MCF 10A (cell line): ENCODE measurements at regions of chr14 and their contacts with region 1.

Region 1: GRCh38 chr14:33589326-33589725 is 361.5 kb downstream of the EGLN3 start:
- DNase-seq: peak; percentile 95
- H3K4me3 Mint-ChIP-seq: no peak overlapping the region
- H3K27ac Mint-ChIP-seq: peak overlapping the region; percentile 81
- H3K4me1 Mint-ChIP-seq: peaks cover 12% of the 10 kb centered on the region
- H3K27me3 Mint-ChIP-seq: no peaks in the 10 kb centered on the region
- CTCF ChIP-seq: no peak

Region 2: GRCh38 chr14:33465846-33466635 is 123.3 kb before region 1 on chr14:
- CTCF ChIA-PET with region 1: no interaction called
- POLR2A ChIA-PET with region 1: no interaction called
- intact Hi-C with region 1: no loop called
- DNase-seq: no peak
- H3K4me3 Mint-ChIP-seq: no peak overlapping the region
- H3K27ac Mint-ChIP-seq: no peak overlapping the region
- H3K4me1 Mint-ChIP-seq: no peaks in the 10 kb centered on the region
- H3K27me3 Mint-ChIP-seq: no peaks in the 10 kb centered on the region
- CTCF ChIP-seq: no peak

Region 3: DNA sequence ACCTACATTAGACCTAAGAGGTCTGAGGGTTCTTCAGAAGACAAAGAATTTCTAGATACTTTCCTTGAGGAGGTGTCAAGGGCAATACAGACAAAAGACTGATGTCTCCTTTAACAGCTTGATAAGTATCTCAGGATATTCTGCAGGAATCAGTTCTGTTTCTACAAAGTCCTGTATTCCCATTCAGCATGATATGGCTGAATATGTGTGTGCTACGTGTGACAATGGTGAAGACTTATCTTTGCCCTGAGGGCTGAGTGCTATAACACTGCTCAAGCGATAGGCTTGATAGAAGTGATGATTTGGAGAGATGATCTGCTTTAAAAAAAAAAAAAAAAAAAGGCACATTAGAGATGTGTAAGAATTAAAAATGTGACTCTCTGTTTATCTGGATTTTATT is 68.1 kb before region 1 on chr14:
- CTCF ChIA-PET with region 1: no interaction called
- POLR2A ChIA-PET with region 1: no interaction called
- intact Hi-C with region 1: no loop called
- DNase-seq: no peak
- H3K4me3 Mint-ChIP-seq: no peak overlapping the region
- H3K27ac Mint-ChIP-seq: no peak overlapping the region
- H3K4me1 Mint-ChIP-seq: peaks cover 22% of the 10 kb centered on the region
- H3K27me3 Mint-ChIP-seq: no peaks in the 10 kb centered on the region
- CTCF ChIP-seq: no peak

Region 4: GRCh38 chr14:33556382-33557121 is 32.8 kb before region 1 on chr14:
- CTCF ChIA-PET with region 1: no interaction called
- POLR2A ChIA-PET with region 1: no interaction called
- intact Hi-C with region 1: loop called (anchors 1 kb)
- DNase-seq: peak; percentile 83
- H3K4me3 Mint-ChIP-seq: no peak overlapping the region
- H3K27ac Mint-ChIP-seq: peak overlapping the region; percentile 72
- H3K4me1 Mint-ChIP-seq: peaks cover 16% of the 10 kb centered on the region
- H3K27me3 Mint-ChIP-seq: no peaks in the 10 kb centered on the region
- CTCF ChIP-seq: no peak

Region 5: DNA sequence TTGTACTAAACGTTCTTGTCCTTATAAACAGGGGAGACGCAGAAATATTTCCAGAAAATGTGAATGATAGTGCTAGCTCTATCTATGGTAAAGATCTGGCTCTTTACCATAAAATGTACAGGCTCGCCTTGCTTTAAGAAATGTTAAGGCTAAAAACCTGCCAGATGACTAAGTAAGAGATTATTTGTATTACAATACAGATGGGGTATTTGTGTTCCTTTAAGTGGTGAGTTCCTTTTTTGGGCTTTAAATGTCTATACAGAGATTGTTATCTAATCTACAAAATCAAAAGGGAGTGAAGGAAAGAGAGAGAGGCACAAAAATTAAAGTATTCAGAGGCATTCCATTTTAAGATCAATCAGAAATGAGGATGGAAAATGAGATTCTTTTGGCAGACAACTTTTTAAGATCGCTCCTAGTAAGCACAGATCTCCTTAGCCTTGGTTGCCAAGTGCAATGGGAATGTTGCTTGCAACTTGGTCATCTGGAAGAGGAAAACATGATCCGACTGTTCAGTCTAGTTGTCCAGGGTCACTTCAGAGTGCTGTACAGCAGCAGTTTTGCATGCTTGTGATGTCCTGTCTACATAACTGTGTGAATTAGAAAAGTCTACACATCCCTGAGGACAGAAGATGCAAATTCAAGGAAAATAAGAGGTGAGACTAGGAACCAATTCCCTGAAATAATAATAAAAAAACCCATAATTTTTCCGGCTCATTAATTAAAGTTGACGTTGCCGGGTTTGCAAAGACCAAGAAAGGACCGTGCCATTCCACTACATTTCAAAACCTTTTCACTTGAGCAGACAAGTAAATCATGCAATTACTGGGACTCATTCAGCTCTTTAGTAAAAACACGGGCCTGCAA is 19.3 kb before region 1 on chr14:
- CTCF ChIA-PET with region 1: interaction called, 3 read pairs
- POLR2A ChIA-PET with region 1: interaction called, 7 read pairs
- intact Hi-C with region 1: loop called (anchors 2 kb)
- DNase-seq: no peak
- H3K4me3 Mint-ChIP-seq: no peak overlapping the region
- H3K27ac Mint-ChIP-seq: peak overlapping the region; percentile 41
- H3K4me1 Mint-ChIP-seq: peaks cover 37% of the 10 kb centered on the region
- H3K27me3 Mint-ChIP-seq: no peaks in the 10 kb centered on the region
- CTCF ChIP-seq: no peak